ENCODE measurements at regions of chr4 and their contacts with region 1.

Region 1: GRCh38 chr4:153541456-153542096 is 75.4 kb downstream of the TMEM131L start:
- DNase-seq: peak; percentile 41
- H3K4me3 Mint-ChIP-seq: no peak overlapping the region
- H3K27ac Mint-ChIP-seq: no peak overlapping the region
- H3K4me1 Mint-ChIP-seq: peaks cover 28% of the 10 kb centered on the region
- H3K27me3 Mint-ChIP-seq: no peaks in the 10 kb centered on the region

Region 2: GRCh38 chr4:153528705-153529485 is 12.7 kb before region 1 on chr4:
- CTCF ChIA-PET with region 1: interaction called, 6 read pairs
- POLR2A ChIA-PET with region 1: interaction called, 16 read pairs
- DNase-seq: no peak
- H3K4me3 Mint-ChIP-seq: peak overlapping the region; percentile 54
- H3K27ac Mint-ChIP-seq: peak overlapping the region; percentile 81
- H3K4me1 Mint-ChIP-seq: peaks cover 78% of the 10 kb centered on the region
- H3K27me3 Mint-ChIP-seq: no peaks in the 10 kb centered on the region

Region 3: GRCh38 chr4:153573881-153574802 is 32.6 kb after region 1 on chr4:
- CTCF ChIA-PET with region 1: interaction called, 11 read pairs
- POLR2A ChIA-PET with region 1: no interaction called
- DNase-seq: peak; percentile 77
- H3K4me3 Mint-ChIP-seq: no peak overlapping the region
- H3K27ac Mint-ChIP-seq: peak overlapping the region; percentile 9
- H3K4me1 Mint-ChIP-seq: peaks cover 31% of the 10 kb centered on the region
- H3K27me3 Mint-ChIP-seq: no peaks in the 10 kb centered on the region